Activated T-helper 1 cell treated with anti-CD3 and anti-CD28 coated beads, Interleukin-12 subunit alpha, Interleukin-12 subunit beta, Interleukin-2, Interleukin-4 antibody, amounts not matched to agents 30 ng/mL and 10 ng/mL and 1 ng/mL, durations not matched to agents 14 hours and 24 hours and 36 hours (primary cell): ENCODE measurements at regions of chr4 and their contacts with region 1.

Region 1: DNA sequence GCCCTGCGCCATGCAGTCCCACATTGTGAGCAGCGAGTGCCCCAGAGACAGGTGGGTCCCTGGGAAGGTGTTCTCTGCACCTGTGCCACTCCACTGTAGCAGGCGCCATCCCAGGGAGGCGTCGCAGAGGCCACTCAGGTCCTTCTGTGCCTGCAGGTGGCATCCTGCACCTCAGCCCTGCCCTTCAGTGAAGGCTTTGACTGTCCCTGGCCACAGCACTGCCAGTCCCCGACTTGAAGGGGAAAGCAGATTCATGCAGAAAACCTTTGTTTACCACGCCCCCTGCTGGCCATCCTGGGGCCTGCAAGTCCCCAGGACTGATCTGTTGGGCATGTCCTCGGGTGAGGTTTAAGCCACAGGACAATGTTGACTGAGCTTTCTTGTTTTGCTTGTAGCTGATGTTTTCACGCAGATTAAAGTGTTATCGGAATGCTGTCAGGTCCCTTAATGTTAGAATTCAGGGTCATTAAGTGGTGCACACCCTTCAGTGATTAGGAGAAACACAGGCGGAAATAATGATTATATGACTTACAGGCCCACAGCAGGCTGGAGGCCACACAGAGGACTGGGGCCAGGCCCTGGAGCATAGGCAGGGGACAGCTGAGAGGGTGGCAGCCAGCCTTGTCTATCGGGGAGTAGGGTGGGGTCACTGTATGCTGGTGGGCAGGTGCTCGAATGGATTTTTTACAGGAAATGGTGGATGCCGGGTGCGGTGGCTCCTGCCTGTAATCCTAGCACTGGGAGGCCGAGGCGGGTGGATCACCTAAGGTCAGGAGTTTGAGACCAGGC is 5.0 kb downstream of the TACC3 start:
- DNase-seq: peak; percentile 80
- H3K4me3 Mint-ChIP-seq: peak overlapping the region; percentile 10
- H3K27ac Mint-ChIP-seq: peak overlapping the region; percentile 37
- H3K4me1 Mint-ChIP-seq: peaks cover 47% of the 10 kb centered on the region
- H3K27me3 Mint-ChIP-seq: no peaks in the 10 kb centered on the region

Region 2: DNA sequence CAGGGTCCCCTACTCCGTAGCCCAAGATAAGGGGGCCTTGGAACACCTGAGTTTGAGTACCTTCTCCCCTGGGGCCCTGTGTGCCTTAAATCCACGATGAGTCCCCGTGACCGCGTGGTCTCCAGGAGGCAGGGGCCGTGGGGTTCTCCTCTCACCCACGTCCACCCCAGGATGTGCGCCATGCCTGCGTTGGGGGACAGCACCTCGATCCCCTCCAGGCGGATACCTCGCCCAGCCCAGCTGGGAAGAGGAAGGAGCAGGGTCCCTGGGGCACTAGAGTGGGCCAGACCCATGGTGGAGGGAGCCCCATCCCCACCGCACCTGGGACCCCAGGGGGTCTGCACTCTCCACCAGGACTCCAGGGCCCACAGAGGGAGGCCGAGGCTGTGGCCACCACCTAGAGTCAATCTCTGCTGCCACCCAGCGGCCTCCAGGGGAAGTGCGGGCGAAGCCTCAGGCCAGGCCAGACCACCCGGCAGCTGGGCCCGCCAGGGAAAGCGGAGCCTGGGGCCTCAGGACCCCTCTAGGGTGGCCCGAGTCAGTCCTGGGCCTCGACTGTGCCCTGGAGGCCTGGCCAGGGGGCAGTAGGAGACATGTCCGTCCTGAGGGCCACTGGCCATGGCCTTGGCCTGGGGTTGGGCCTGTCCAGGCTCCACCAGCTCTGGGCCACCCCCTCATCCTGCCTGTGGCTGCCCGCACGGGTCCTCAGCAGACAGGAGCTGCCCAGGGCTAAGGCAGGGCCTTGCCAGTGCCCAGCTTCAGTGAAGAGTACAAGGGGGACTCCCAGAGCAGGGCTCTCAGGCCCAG is 97.2 kb before region 1 on chr4:
- intact Hi-C with region 1: loop called (anchors 5 kb)
- DNase-seq: peak; percentile 35
- H3K4me3 Mint-ChIP-seq: no peak overlapping the region
- H3K27ac Mint-ChIP-seq: no peak overlapping the region
- H3K4me1 Mint-ChIP-seq: no peaks in the 10 kb centered on the region
- H3K27me3 Mint-ChIP-seq: no peaks in the 10 kb centered on the region

Region 3: DNA sequence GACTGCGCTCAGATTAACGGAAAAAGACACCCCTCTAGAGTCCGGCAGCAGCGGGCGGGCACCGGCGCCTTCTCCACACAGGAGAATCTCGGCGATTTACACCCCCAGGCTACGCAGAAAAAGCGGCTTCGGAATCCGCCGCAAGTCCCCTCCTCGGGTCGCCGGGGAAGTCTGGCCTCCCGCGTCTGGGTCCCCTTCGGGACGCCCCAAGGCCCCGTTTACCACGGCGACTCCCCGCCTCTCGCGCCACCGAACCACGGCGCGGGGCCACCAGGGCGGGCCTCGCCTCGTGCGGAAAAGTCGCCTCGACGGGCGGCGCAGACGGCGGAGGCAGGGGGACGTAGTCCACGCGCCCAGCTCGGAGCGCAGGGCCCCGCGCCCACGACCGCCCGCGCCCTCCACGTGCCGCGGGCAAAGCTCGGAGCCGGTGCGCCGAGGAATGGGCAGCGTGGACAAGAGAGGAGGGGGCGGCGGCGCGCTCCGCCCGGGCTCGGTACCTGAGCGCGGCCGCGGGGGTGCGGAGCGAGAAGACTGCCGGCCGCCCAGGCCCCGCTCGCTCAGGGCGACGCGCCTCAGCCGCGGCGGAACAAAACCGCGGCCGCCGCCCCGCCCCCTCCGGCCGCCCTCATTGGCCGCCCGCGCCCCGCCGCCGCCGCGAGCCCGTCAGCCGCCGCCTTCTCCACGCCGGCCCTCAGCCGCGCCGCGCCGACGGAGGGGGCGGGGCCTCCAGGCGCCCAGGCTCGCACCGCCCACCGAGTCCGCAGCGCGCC is 42.4 kb before region 1 on chr4 and contains the start of gene FAM53A:
- intact Hi-C with region 1: loop called (anchors 1 kb)
- DNase-seq: peak; percentile 93
- H3K4me3 Mint-ChIP-seq: peak within 1 kb of the TSS; percentile 87
- H3K27ac Mint-ChIP-seq: peak within 1 kb of the TSS; percentile 90
- H3K4me1 Mint-ChIP-seq: peaks cover 12% of the 10 kb centered on the region
- H3K27me3 Mint-ChIP-seq: peaks cover 2% of the 10 kb centered on the region
- total RNA-seq, gene FAM53A: 2.5 and 5.5 TPM in 2 replicates

Region 4: DNA sequence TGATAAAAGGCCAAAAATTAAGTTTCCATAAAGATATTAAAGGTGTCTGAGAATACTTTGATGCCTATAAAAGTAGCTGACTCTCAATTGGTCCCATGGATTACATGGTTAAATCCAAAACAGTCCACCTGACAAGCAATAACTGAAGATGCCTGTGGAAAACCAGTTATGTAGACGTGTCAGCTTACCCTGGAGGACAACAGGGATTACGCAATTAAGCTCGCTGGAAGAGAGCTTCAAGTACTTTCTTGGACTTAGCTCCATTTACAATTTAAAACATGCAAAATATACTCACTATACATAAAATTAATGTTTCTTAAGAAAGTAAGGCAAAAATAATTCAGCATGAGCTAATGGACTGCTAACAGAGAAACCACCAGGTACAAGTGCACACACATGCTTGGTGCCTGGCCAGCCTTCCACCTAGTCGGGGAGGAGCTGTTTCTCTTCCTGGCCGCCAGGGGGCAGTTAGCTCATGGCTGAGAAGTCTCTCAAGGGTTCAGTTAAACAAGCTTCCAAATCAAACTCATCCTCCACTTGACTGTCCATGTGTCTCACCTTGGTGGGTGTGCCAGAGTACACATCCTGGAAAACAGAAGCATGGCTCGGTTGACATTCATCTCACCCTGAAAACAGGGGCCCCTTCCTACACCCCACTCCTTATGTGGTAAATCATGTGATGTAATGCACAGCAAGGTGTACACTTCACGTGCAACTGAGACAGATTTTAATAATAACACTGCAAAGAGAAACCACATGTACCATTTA is 33.0 kb before region 1 on chr4:
- intact Hi-C with region 1: loop called (anchors 1 kb)
- DNase-seq: peak; percentile 61
- H3K4me3 Mint-ChIP-seq: no peak overlapping the region
- H3K27ac Mint-ChIP-seq: peak overlapping the region; percentile 15
- H3K4me1 Mint-ChIP-seq: no peaks in the 10 kb centered on the region
- H3K27me3 Mint-ChIP-seq: no peaks in the 10 kb centered on the region

Region 5: GRCh38 chr4:1813915-1814314 is 87.6 kb after region 1 on chr4:
- intact Hi-C with region 1: no loop called
- DNase-seq: no peak
- H3K4me3 Mint-ChIP-seq: no peak overlapping the region
- H3K27ac Mint-ChIP-seq: no peak overlapping the region
- H3K4me1 Mint-ChIP-seq: no peaks in the 10 kb centered on the region
- H3K27me3 Mint-ChIP-seq: no peaks in the 10 kb centered on the region